Activated CD8-positive, alpha-beta T cell treated with anti-CD3 and anti-CD28 coated beads for 36 hours (primary cell): ENCODE measurements at regions of chr20 and their contacts with region 1.

Region 1: DNA sequence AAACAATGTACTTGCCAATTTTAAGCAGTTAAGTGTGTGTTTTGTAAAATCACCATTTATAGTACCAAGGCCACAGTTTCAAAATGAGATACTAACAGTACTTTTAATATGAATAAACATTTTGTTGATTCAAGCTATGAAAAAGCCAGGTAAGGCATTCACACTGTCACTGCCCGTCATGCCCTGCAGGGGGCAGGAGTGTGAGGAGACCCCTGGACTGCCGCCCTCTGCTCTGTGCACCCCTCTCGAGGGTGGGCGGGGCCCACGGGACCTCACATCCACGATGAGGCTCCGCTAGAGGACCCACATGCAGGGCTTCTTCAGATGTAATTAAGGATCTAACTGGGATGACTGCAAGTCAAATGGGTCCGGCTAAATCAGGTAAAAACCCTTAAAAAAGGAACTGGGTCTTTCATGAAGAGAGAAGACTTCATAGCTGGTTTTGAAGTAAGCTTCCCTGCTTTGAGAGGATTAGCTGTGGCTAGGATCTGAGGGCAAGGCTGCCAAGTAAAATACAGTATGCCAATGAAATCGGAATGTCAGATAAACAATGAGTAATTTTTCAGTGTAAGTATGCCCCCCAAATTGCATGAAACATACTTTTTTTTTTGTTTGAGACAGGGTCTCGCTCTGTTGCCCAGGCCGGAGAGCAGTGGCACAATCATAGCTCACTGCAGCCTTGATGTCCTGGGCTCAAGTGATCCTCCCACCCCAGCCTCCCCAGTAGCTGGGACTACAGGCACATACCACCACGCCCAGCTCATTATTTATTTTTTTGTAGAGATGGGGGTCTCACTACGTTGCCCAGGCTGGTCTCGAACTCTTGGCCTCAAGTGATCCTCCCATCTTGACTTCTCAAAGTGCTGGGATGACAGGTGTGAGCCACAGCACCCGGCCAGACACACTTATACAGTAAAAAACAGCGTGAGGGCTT is 18.7 kb downstream of the DIDO1 start:
- DNase-seq: peak; percentile 68
- ATAC-seq: peak; percentile 89
- H3K4me3 Mint-ChIP-seq: no peak overlapping the region
- H3K27ac Mint-ChIP-seq: peak overlapping the region; percentile 73
- H3K4me1 Mint-ChIP-seq: peaks cover 28% of the 10 kb centered on the region
- H3K27me3 Mint-ChIP-seq: no peaks in the 10 kb centered on the region
- CTCF ChIP-seq: peak; percentile 71

Region 2: GRCh38 chr20:62891111-62891510 is 16.5 kb before region 1 on chr20:
- CTCF ChIA-PET with region 1: interaction called, 16 read pairs
- POLR2A ChIA-PET with region 1: interaction called, 7 read pairs
- intact Hi-C with region 1: no loop called
- DNase-seq: peak; percentile 31
- ATAC-seq: peak; percentile 37
- H3K4me3 Mint-ChIP-seq: no peak overlapping the region
- H3K27ac Mint-ChIP-seq: peak overlapping the region; percentile 50
- H3K4me1 Mint-ChIP-seq: peaks cover 24% of the 10 kb centered on the region
- H3K27me3 Mint-ChIP-seq: no peaks in the 10 kb centered on the region
- CTCF ChIP-seq: no peak

Region 3: DNA sequence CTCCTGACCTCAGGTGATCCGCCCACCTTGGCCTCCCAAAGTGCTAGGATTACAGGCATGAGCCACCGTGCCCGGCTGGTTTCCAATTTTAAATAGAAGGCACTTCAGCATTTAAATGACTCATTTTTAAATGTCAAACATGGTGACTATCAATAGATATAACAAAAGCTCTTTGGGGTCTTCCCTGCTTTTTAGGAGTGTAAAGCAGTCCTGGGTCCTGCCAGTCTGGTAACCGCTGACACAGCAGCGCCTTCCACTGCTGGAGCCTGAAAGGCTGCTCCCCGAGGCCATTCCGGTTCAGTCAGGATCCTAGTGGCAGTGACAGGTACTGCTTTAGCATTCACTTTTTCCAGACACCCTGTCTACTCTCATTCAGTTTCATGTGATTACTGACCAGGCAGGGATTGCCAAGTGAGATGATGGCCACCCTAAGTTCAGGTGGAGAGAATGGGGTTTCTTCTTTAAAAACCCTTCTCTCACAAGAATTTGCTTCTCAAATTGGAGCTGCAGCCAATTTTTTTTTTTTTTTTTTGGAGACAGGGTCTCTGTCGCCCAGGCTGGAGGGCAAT is 13.6 kb after region 1 on chr20:
- CTCF ChIA-PET with region 1: interaction called, 113 read pairs
- POLR2A ChIA-PET with region 1: interaction called, 50 read pairs
- intact Hi-C with region 1: no loop called
- DNase-seq: peak; percentile 89
- ATAC-seq: peak; percentile 70
- H3K4me3 Mint-ChIP-seq: peak overlapping the region; percentile 15
- H3K27ac Mint-ChIP-seq: peak overlapping the region; percentile 90
- H3K4me1 Mint-ChIP-seq: peaks cover 74% of the 10 kb centered on the region
- H3K27me3 Mint-ChIP-seq: no peaks in the 10 kb centered on the region
- CTCF ChIP-seq: peak; percentile 71

Region 4: DNA sequence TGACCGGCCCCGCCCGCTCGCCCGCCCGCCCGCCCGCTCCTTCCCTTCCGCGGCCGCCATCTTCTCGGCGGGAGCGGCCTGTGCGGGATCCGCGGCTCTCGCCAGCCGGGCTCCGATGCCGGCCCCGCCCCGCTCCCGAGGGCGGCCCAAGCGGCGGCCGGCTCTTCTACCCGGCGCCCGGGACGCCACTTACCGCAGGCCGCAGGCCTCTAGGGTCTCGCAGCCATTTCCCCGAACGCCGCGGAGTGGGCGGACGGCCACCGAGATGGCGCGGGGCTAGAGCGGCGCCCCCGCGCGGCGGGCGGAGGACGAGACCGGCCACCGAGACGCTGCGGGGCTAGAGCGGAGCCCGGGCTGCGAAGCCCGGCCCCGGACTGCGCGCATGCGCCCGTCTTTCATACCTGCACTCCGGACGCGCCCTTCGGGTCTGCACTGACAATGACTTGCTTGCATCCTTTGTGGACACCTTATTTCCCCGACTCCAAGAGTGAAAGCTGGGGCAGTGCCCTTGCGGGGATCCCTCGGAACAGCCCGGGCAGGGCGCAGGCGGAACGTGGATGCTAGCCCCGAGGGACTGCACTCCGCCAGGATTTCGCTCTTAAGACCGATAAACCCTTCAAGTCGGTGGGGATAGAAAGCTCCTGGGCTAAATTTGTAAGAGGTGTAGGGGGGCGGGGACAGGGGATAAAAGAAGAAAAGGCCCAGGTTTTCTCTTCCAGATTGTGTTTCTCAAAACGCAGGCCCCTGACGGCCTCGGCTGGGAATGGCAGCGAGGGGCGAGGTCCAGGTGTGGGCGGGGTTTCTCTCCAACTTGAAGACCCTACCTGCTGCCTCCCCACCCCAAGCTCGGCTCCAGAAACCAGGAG is 18.8 kb after region 1 on chr20 and contains the start of gene DIDO1:
- CTCF ChIA-PET with region 1: interaction called, 104 read pairs
- POLR2A ChIA-PET with region 1: interaction called, 50 read pairs
- intact Hi-C with region 1: no loop called
- DNase-seq: peak; percentile 89
- ATAC-seq: peak; percentile 75
- H3K4me3 Mint-ChIP-seq: peak within 1 kb of the TSS; percentile 97
- H3K27ac Mint-ChIP-seq: peak within 1 kb of the TSS; percentile 95
- H3K4me1 Mint-ChIP-seq: peaks cover 64% of the 10 kb centered on the region
- H3K27me3 Mint-ChIP-seq: no peaks in the 10 kb centered on the region
- CTCF ChIP-seq: peak; percentile 46
- total RNA-seq, gene DIDO1: 45.9 to 47.4 TPM

Region 5: DNA sequence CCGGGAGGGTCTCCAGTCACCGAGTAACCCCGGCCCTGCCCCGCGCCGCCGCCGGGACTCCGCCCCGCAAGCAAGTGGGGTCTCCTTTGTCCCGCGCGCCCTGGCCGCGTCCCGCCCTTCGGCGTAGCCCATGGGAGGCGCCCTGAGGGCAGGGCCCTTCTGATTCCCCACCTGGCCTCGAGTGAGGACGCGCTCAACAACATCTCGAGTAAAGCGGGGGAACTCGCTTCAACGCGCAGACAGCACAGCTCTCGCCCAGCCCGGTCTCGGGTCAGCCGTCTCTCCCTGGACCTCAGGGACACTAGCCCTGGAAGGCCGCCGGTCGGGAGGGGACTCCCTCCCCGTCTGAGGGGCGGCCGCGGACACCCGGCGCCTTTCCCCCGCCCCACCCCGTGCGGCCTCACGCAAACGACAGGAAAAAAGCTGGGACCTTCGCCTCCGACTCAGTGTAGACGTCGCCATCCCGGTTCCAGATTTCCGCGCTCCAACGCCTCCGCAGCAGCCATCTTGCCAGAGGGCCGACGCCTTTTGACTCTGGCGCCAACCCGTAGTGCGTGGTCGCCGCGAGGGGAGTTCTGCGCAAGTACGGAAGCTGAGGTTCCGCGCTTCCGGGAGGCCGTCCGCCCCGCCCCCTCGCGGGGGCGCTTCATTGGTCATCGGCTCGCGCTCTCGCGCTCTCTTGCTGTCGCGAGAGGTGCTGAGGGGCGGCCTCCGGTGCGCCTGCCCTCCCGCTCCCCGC is 29.9 kb after region 1 on chr20:
- CTCF ChIA-PET with region 1: interaction called, 14 read pairs
- POLR2A ChIA-PET with region 1: interaction called, 243 read pairs
- intact Hi-C with region 1: no loop called
- DNase-seq: peak; percentile 98
- ATAC-seq: peak; percentile 93
- H3K4me3 Mint-ChIP-seq: no peak overlapping the region
- H3K27ac Mint-ChIP-seq: peak overlapping the region; percentile 98
- H3K4me1 Mint-ChIP-seq: peaks cover 31% of the 10 kb centered on the region
- H3K27me3 Mint-ChIP-seq: no peaks in the 10 kb centered on the region
- CTCF ChIP-seq: no peak

Region 6: DNA sequence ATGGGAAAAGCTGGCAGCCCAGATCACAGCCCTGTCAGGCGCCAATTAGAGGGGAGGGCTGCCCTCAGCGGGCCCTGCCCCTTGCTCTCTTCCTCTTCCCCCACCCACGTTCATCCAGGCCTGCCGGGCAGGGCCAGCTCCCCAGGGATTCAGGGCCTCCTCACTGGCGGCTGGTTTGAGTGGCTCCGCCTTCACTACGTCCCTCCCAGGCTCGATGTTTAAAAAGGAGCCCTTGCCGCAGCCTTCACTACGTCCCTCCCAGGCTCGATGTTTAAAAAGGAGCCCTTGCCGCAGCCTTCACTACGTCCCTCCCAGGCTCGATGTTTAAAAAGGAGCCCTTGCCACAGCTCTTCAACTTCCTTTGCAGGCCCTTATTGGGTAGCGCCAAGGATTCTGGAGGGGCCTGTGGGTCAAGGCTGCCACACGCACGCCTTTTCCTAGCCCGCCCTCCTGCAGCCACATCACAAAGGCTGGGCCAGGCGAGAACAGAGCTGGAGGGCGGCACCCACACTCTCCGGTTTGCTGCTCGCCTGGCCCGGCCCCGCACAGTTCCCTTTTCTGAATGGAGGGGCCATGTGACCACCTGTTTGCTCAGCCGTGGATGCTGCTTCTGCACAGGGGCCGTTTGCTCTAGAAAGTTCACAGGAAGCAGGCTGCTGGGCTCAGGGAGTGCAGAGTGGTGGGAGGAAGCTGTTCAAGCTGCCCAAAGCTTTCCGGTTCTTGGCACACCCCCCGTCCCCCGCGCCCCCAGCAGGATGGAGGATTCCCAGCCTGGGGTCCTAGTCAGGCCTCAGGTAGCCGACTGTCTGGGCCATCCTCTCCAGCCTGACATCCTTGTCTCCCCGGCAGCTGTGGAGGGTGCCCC is 46.4 kb after region 1 on chr20:
- CTCF ChIA-PET with region 1: interaction called, 14 read pairs
- POLR2A ChIA-PET with region 1: interaction called, 3 read pairs
- intact Hi-C with region 1: loop called (anchors 10 kb)
- DNase-seq: peak; percentile 89
- ATAC-seq: peak; percentile 86
- H3K4me3 Mint-ChIP-seq: peak overlapping the region; percentile 85
- H3K27ac Mint-ChIP-seq: peak overlapping the region; percentile 90
- H3K4me1 Mint-ChIP-seq: peaks cover 24% of the 10 kb centered on the region
- H3K27me3 Mint-ChIP-seq: no peaks in the 10 kb centered on the region
- CTCF ChIP-seq: no peak